ENCODE measurements at regions of chr4 and their contacts with region 1.

Region 1: GRCh38 chr4:139295206-139295941 is 5.9 kb upstream of the NAA15 start:
- DNase-seq: peak; percentile 96 to 100 (median 99)

Region 2: GRCh38 chr4:139030614-139031235 is 264.6 kb before region 1 on chr4:
- intact Hi-C with region 1: loop called (anchors 1 kb)
- DNase-seq: peak in 7 of 10 donors; percentile 44 to 93 (median 76)

Region 3: DNA sequence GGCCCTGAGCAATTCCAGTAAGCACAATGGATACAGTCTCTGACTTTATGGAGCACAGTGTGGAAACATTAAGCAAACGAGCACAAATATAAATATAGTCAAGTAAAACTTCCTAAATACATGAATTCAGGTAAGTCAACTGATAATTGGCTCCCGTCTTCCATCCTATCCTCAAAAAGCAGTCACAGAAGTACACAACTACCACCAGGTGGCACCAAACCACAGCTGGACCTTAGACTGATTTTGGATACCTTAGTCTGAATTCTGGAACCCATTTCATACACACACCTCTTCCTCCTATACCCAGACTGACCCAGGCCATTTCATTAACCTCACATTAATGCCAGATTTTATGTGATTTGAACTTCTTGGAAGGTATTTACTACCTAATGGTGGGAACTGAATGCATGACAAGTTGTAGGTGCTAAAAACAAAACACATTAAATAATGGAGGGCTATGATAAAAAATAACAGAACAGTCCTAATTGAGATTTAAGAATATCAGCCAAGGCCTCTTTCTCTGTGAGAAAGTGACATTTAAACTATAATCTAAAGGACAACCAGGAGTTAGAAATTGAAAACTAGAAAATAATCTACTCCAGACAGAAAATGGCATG is 195.9 kb before region 1 on chr4:
- intact Hi-C with region 1: loop called (anchors 2 kb)
- DNase-seq: peak in 6 of 10 donors; percentile 58 to 92 (median 70)

Region 4: GRCh38 chr4:139229534-139230039 is 65.8 kb before region 1 on chr4:
- intact Hi-C with region 1: loop called (anchors 2 kb)
- DNase-seq: no peak

Region 5: GRCh38 chr4:139453371-139454110 is 158.2 kb after region 1 on chr4:
- intact Hi-C with region 1: loop called (anchors 5 kb)
- DNase-seq: peak; percentile 86 to 99 (median 91)

Measured in posterior cingulate gyrus (tissue), 11 donors.